Naive thymus-derived CD8-positive, alpha-beta T cell (primary cell): ENCODE measurements at regions of chr15 and their contacts with region 1.

Region 1: DNA sequence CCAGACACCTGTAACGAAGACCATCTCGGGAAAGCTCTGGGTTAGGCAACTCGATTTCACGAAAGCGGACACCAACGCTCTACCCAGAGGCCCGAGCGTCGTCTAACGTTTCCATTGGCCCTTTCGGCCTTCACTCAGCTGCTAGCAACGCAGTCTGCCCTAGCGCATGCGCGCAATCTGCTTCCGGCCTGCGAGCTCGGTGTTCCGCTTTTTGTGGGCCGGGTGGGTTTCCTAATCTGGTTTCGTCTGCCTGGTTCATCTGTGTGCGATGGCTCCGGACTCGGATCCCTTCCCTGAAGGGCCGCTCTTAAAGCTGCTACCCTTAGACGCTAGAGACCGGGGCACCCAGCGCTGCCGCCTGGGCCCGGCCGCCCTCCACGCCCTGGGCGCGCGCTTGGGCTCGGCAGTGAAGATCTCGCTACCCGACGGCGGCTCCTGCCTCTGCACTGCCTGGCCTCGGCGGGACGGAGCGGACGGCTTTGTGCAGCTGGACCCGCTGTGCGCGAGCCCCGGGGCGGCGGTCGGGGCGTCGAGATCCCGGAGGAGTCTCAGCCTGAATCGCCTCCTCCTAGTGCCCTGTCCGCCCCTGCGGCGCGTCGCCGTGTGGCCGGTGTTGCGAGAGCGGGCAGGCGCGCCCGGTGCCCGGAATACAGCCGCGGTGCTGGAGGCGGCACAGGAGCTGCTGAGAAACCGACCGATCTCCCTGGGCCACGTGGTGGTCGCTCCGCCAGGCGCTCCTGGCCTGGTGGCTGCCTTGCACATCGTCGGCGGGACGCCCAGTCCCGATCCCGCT is 24.0 kb upstream of the GATM start:
- DNase-seq: peak; percentile 90 to 98 (median 96)
- ATAC-seq: peak; percentile 95
- H3K4me3 Mint-ChIP-seq: peak overlapping the region; percentile 92 to 97 (median 96)
- H3K27ac Mint-ChIP-seq: peak overlapping the region; percentile 82 to 99 (median 97)
- H3K4me1 Mint-ChIP-seq: peaks cover 9 to 43% (median 35%) of the 10 kb centered on the region in 4 donors
- H3K27me3 Mint-ChIP-seq: peaks cover 0 to 1% (median 0%) of the 10 kb centered on the region in 5 donors

Region 2: DNA sequence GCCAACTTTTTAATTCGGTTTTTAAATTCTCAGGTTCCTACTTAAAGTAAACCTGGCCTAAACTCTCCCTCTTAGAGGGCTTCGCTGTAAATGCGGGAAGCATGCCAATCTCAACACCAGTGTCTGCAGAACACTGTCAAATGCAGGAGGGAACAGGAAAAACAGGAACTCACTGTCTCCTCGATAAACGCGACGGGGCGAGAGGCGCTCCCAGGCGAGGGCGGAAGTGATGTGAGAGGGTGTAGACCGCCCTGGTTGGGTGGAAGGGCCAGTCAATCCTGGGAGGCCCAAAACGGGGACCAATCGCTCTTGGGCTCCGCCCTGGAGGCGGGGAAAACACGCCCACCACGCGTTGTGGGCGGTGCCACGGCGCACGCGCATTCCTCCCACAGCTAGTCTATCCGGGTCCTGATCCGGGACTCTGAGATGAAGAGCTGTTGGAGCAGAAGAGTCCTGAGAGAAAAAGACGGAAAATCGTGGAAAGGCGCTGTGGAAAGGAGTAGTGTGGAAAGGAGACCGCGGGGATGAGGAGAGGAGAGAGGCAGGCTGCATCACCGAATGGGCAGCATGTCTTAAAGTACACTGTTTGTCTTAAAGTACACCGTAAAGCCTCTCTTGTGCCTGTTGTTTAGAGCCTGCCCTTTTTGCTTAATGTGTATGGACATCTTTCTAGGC is 123.2 kb before region 1 on chr15:
- POLR2A ChIA-PET with region 1: interaction called, 15 read pairs
- DNase-seq: peak; percentile 93 to 99 (median 98)
- ATAC-seq: peak; percentile 99 to 100
- H3K4me3 Mint-ChIP-seq: peak overlapping the region; percentile 86 to 100 (median 96)
- H3K27ac Mint-ChIP-seq: peak overlapping the region; percentile 92 to 99 (median 96)
- H3K4me1 Mint-ChIP-seq: peaks cover 3 to 27% (median 21%) of the 10 kb centered on the region in 4 donors
- H3K27me3 Mint-ChIP-seq: peaks cover 0 to 1% (median 0%) of the 10 kb centered on the region in 5 donors

Region 3: DNA sequence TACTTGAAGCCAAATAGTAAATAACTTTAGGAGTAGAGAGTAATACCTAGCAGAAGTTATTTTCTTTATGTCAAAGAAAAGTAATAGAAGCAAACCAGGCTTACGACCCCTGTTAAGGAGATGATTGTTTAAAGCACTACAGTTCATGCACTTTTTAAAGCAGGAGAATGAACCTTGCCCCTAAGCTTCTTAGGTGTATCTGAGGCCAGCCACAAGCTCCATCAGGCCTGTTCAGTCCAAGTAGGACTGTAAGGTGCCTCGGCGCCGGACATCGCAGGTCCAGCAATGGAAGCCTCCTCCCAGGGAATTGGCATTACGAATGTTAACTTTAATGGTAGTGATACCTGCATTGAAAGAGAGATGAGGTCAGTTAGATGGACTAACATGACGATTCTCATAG is 40.5 kb before region 1 on chr15:
- POLR2A ChIA-PET with region 1: no interaction called
- DNase-seq: no peak
- ATAC-seq: no peak
- H3K4me3 Mint-ChIP-seq: no peak overlapping the region
- H3K27ac Mint-ChIP-seq: no peak overlapping the region
- H3K4me1 Mint-ChIP-seq: no peaks in the 10 kb centered on the region
- H3K27me3 Mint-ChIP-seq: peaks cover 0 to 5% (median 0%) of the 10 kb centered on the region in 5 donors

Region 4: DNA sequence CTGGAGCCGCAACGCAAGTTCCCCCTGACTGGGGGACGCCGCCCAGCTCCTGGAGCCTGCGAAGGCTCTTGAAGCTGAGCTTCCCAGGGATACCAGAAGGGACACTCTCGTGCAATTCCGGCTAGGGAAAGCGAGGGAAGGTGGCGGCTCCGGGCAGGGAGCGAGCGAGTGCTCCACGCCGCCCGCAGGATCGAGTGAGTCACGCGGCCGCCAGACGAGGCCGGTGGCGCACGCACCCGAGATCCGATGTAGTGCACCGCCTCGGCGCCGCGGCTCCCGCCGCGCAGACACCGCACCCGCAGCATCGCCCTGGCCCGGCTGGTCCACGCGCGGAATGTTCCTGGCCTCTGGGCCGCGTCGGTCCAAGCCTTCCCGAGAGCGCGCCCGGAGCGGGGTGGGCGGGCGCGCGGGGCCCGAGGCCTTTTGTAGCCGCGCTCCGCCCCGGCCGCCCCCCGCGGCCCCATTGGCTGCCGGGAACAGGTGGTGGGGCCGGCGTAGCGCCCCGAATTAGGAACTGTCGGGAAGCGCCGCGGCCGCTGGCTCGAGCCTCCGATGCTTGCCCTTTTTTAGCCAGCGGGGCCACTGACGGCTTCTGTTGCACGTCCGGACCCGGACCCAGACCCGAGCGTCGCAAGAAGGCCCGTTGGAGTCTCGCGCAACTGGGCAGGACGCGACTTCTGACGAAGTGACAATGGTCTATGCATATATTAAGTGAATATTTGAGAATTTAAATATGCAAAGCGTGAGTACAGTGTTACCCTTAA is 24.0 kb before region 1 on chr15 and contains the start of gene GATM:
- POLR2A ChIA-PET with region 1: no interaction called
- DNase-seq: peak; percentile 9 to 66 (median 32)
- ATAC-seq: peak; percentile 74 to 84
- H3K4me3 Mint-ChIP-seq: peak within 1 kb of the TSS; percentile 81 to 92 (median 86)
- H3K27ac Mint-ChIP-seq: peak within 1 kb of the TSS in 4 of 10 donors; percentile 13 to 82 (median 70)
- H3K4me1 Mint-ChIP-seq: peaks cover 5 to 26% (median 22%) of the 10 kb centered on the region in 4 donors
- H3K27me3 Mint-ChIP-seq: peaks cover 27 to 44% (median 32%) of the 10 kb centered on the region in 5 donors
- polyA plus RNA-seq, gene GATM: 0.48 to 2.9 TPM in 2 of 3 donors, not detected in the other

Region 5: DNA sequence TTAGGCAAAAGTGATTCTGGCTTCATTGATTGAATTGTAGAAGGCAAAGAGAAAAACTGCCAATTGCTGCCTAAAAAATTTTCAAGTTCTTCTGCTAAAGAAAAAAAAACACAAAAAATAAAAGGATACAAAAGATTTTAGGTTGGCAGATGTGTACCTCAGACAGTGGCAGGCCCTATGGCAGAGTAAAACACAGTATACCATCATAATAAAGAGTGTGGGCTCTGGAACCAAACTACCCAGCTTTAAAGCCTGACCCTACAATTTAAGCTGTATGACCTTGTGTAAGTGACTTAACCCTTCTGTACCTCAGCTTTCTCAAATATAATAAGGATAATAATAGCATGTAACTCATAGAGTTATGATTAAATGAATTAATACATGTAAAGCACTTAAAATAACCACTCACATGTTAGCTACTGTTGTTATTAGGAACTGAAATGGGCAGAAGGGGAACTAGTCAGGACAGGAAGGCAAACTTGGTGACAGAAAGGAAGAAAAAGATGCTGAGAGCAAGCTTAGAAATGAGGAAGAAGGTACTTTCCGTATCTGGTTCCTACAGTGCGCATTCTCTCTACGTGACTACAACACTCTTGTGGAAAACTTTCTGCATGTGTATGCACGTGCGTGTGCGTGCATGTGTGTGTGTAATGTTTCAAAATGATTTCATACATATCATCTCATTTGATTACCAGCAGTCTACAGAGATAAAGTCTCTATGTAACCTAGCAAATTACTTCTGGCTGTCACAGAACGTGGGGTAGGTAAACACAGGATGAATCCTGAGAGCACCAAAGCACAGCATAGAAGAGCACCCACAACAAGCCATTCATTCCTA is 10.4 kb before region 1 on chr15:
- POLR2A ChIA-PET with region 1: interaction called, 13 read pairs
- DNase-seq: no peak
- ATAC-seq: peak in 1 of 2 donors; percentile 46
- H3K4me3 Mint-ChIP-seq: no peak overlapping the region
- H3K27ac Mint-ChIP-seq: peak overlapping the region in 1 of 10 donors; percentile 49
- H3K4me1 Mint-ChIP-seq: peaks cover 0 to 9% (median 0%) of the 10 kb centered on the region in 4 donors
- H3K27me3 Mint-ChIP-seq: peaks cover 17 to 30% (median 25%) of the 10 kb centered on the region in 5 donors

Region 6: DNA sequence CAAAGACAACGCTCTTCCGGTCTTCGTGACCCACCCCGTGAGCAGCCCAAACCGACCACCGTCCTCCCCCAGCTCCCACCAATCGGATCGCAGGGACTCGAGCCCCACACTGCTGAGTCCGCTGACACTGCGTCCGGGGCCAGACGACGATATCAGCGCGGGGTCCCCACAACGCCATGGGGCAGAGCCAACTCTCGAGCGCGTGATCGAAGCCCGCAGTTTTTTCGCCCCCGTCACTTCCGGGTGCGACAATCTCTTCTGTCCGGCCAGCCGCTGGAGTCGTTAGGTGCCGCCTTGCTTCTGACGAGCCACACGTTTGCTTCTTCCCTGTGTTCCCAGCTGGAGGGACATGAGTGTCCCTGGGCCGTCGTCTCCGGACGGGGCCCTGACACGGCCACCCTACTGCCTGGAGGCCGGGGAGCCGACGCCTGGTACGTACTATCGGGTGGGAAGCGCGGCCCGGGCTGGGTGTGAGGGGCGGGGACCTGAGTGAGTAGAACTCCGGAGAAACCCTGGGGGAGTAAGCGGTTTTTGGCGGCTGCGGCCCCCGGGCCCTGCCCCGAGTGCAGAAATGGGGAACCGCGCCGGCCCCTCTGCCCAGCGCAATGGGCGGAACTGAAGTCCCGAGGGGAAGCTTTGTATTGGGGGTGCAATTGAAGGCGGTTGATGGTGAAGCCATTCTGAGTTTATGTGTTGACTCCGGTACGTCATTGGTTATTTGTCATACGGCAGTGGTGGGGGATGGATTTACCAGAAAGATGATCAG is 184.9 kb after region 1 on chr15 and contains the start of gene BLOC1S6:
- POLR2A ChIA-PET with region 1: interaction called, 34 read pairs
- DNase-seq: peak; percentile 77 to 95 (median 90)
- ATAC-seq: peak; percentile 83 to 88
- H3K4me3 Mint-ChIP-seq: peak within 1 kb of the TSS; percentile 93 to 100 (median 99)
- H3K27ac Mint-ChIP-seq: peak within 1 kb of the TSS; percentile 100
- H3K4me1 Mint-ChIP-seq: peaks cover 22 to 55% (median 40%) of the 10 kb centered on the region in 4 donors
- H3K27me3 Mint-ChIP-seq: no peaks in the 10 kb centered on the region
- polyA plus RNA-seq, gene BLOC1S6: 50.9 to 62.1 (median 58.8) TPM